Thyroid gland (tissue), 4 donors: ENCODE measurements at regions of chr6 and their contacts with region 1.

Region 1: DNA sequence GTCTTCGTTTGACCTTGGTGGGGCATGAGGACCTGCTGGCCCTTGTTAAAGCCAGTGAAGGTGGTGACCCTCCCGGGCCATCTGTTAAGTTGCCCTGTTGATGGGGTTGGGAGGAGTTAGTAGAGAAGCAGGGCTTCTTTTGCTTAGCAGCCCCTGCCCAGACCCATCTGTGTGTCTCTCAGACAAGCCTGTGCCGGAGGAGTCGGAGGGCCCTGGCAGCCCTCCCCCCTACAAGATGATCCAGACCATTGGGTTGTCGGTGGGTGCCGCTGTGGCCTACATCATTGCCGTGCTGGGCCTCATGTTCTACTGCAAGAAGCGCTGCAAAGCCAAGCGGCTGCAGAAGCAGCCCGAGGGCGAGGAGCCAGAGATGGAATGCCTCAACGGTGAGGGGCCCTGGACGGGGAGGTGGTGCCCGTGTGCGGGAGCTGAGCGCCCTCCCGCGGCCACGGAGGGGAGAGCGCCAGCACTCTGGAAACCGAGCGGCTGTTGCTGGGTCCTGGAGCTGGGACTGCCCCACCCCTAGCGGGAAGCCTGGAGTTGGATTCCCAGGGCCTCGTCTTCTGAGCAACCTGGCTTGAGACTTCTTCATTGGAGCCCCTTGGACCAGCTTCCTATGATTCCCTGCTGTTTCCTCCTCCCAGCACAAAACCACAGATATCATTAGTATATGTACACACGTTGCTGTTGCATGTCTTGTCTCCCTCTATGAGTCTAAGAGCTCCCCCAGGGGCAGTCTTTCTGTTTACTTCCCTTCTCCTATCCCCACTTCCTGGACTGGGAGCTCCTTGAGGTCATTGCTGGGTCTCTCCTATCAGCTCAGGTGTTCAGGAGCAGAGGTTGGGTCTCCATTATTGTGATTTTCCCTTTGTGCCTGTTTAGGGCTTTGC is 27.6 kb upstream of the SRF start:
- DNase-seq: peak; percentile 92 to 94
- H3K4me3 ChIP-seq: no peak overlapping the region
- H3K27ac ChIP-seq: no peak overlapping the region
- H3K4me1 ChIP-seq: peaks cover 3 to 7% of the 10 kb centered on the region in 2 donors
- H3K27me3 ChIP-seq: no peaks in the 10 kb centered on the region
- CTCF ChIP-seq: peak; percentile 84 to 99 (median 94)
- POLR2A ChIP-seq: no peak

Region 2: DNA sequence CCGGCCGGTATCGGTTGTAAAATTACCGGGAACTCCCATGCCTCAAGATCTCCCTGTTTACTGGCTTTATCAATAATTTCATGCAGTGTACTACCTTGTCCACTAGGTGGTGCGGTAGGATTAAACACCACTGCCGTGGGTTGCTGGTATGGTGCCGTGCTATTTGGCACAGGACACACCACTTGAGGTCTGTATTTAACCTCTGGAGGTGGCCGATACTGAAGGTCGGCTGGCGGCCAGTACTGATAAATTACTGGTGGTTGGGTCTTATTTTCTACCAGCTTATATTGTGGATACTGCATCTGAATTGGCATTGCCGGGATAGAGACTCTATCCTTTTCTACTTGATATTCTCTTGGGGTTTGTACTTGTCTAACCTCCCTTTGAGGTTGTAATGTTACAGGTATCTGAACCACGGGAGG is 241.9 kb before region 1 on chr6:
- intact Hi-C with region 1: loop called (anchors 5 kb)
- DNase-seq: peak; percentile 89 to 91
- H3K4me3 ChIP-seq: no peak overlapping the region
- H3K27ac ChIP-seq: no peak overlapping the region
- H3K4me1 ChIP-seq: peaks cover 0 to 7% of the 10 kb centered on the region in 2 donors
- H3K27me3 ChIP-seq: no peaks in the 10 kb centered on the region
- CTCF ChIP-seq: peak; percentile 79 to 96 (median 89)
- POLR2A ChIP-seq: no peak

Region 3: DNA sequence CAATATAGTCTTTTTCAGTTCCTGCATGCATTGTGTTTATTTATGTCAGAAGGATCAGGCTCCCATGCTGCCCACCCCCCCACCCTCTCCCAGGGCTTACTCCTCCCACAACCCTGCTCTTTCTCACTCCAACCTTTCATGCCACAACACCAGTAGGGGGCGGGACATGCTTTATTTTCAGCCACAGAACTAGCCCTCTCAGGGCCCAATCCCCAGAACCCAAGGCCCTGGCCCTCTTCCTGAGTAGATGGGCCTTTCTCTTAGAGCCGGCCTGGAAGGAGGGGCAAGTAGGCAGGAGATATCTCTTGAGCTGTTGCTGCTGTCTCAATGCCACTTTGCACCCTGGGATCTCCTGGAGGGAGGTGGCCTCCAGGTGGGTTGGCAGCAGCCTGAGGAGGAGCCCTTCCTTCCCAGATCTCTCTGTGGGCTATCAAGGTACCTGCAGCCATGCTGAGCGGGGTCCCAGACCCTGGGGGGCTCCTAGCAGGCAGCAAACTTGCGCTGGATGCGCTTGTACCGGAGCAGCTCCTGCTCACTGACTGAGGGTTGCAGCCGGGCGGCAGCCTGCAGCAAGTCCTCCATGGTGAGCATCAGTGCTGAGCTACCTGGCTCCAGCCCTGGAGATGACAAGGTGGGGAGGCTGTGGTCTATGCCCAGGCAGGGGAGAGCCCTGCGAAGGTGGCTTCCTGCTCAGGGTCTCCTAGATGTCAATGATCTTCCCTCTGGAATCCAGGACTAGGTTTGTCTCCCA is 179.4 kb before region 1 on chr6:
- intact Hi-C with region 1: no loop called
- DNase-seq: peak in 1 of 2 donors; percentile 6
- H3K4me3 ChIP-seq: no peak overlapping the region
- H3K27ac ChIP-seq: no peak overlapping the region
- H3K4me1 ChIP-seq: peaks cover 5 to 16% of the 10 kb centered on the region in 2 donors
- H3K27me3 ChIP-seq: no peaks in the 10 kb centered on the region
- CTCF ChIP-seq: peak in 1 of 6 experiments; percentile 7
- POLR2A ChIP-seq: no peak

Region 4: DNA sequence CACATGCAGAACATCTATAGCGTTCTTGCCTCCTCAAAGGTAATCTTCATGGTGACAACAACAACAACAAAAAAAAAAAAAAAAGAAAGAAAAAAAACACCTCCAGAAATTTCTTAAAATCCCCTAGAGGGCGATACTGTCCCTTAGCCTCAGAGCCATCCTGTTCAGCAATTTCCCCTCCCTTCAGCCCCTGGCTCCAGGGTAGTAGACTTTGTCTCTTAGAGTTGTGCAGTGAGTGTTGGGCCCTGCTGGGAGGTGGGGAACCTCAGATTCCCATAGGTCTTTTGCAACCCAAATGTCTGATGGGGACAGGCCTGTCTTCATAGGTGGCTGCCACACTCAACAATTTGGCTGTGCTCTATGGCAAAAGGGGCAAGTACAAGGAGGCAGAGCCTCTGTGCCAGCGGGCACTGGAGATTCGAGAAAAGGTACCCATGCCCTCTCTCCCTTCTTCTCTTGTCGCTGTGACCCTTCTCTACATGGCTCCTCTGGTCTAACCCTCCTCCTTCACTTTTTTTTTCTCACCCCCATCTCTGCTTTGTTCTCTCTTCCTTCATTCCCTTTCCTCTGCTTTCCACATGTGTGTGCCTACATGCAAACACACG is 73.3 kb before region 1 on chr6:
- intact Hi-C with region 1: loop called (anchors 5 kb)
- DNase-seq: no peak
- H3K4me3 ChIP-seq: no peak overlapping the region
- H3K27ac ChIP-seq: no peak overlapping the region
- H3K4me1 ChIP-seq: no peaks in the 10 kb centered on the region
- H3K27me3 ChIP-seq: no peaks in the 10 kb centered on the region
- CTCF ChIP-seq: peak in 5 of 6 experiments; percentile 12 to 59 (median 33)
- POLR2A ChIP-seq: no peak

Region 5: DNA sequence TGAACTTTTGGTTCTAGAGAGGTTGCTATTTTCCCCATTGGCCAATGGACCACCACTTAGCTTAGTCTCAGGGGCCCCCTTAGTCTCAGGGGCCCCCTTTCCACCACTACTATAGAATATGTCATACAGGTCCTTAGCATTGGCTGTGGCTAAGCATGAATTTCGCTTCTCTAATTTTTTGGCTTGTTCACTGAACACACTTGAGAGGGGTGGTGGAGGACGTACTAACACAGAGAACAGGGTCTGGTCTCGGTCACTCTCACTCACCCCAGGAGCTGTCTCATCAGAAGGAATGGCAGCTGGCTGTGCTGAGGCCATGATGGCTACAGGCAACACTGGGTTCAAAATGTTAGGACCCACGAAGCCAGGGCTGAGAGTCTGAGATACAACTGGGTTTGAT is 195.7 kb after region 1 on chr6:
- intact Hi-C with region 1: no loop called
- DNase-seq: no peak
- H3K4me3 ChIP-seq: no peak overlapping the region
- H3K27ac ChIP-seq: no peak overlapping the region
- H3K4me1 ChIP-seq: no peaks in the 10 kb centered on the region
- H3K27me3 ChIP-seq: no peaks in the 10 kb centered on the region
- CTCF ChIP-seq: no peak
- POLR2A ChIP-seq: no peak